Activated T-helper 1 cell treated with anti-CD3 and anti-CD28 coated beads, Interleukin-12 subunit alpha, Interleukin-12 subunit beta, Interleukin-2, Interleukin-4 antibody, amounts not matched to agents 30 ng/mL and 10 ng/mL and 1 ng/mL, durations not matched to agents 14 hours and 24 hours and 36 hours (primary cell): ENCODE measurements at regions of chr5 and their contacts with region 1.

Region 1: GRCh38 chr5:78359831-78360673 is at the start of gene SCAMP1:
- DNase-seq: peak; percentile 93
- H3K4me3 Mint-ChIP-seq: peak within 1 kb of the TSS; percentile 98
- H3K27ac Mint-ChIP-seq: peak within 1 kb of the TSS; percentile 92
- H3K4me1 Mint-ChIP-seq: peaks cover 32% of the 10 kb centered on the region
- H3K27me3 Mint-ChIP-seq: no peaks in the 10 kb centered on the region
- total RNA-seq, gene SCAMP1: 21.3 and 21.7 TPM in 2 replicates

Region 2: GRCh38 chr5:78260771-78261170 is 99.3 kb before region 1 on chr5:
- intact Hi-C with region 1: no loop called
- DNase-seq: no peak
- H3K4me3 Mint-ChIP-seq: no peak overlapping the region
- H3K27ac Mint-ChIP-seq: no peak overlapping the region
- H3K4me1 Mint-ChIP-seq: no peaks in the 10 kb centered on the region
- H3K27me3 Mint-ChIP-seq: no peaks in the 10 kb centered on the region

Region 3: DNA sequence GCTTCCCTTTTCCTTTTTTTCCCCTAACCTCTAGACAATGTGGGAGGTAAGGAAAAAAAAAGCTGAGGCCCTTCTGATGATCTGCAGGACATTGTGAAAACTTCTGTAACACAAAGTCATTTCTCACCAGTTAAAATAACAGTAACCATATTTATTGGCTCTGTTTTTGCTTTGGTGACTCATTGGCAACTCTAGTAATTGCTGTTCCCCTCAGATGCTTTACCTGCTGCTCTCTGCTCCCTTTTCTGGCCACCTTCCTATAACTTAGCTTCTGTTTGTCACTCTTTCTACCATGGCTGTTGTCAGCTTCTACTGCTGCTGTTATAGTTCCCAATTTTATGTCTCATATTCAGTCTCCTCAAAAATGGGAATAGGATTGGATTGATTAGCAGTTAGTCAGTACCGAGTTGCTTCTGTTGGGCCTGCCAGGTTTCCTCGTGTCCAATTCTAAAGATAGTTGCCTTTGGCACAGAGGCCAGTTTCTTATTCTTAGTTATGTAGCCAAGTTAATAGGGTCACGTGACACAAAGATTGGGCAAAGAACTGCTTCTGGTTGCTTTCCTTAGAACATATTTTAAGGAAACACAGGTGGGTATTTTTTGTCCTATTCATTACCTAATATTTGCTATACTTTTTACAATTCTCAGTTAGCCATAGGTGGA is 17.1 kb after region 1 on chr5:
- intact Hi-C with region 1: no loop called
- DNase-seq: no peak
- H3K4me3 Mint-ChIP-seq: no peak overlapping the region
- H3K27ac Mint-ChIP-seq: no peak overlapping the region
- H3K4me1 Mint-ChIP-seq: peaks cover 10% of the 10 kb centered on the region
- H3K27me3 Mint-ChIP-seq: no peaks in the 10 kb centered on the region

Region 4: DNA sequence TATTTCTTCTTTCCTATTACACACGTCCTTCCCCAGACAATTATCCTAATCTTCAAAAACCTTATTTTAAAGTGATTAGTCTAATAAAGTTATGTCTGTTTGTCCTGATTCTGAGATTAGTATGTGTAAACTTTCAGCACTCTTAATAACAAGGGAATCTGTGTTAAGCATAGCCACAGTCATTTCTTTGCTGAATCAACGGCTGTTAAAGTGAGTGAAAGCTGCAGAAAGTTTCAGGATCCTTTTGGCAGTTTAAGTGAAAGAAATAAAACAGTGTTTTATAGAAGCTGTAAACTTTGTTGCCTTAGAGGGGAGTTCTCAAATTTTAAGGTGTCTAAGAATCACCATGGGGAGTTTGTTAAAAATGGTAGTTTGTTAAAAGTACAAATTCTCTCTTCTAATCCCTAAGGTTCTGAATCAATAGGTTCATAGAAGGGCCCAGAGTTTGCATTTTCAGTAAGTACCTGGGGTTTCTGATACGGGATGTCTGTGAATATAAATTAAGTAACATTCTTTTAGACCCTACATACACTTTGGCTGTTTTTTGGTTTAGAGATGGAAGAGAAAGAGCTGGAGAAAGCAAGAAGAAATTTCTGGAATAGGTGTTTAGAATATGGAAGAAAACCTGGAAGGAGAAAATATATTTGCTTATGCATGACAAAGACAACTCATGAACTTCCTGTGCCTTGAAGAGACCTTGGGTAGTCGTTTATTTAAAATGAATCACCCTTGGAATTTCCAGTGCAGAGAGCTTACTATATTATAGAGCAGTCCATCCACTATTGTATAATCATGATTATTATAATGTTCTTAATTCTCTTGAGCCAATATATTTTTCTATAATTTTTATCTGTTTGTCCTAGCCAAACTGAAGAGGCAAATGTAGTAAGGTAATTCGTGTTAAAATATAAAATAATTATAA is 46.0 kb after region 1 on chr5:
- intact Hi-C with region 1: loop called (anchors 2 kb)
- DNase-seq: no peak
- H3K4me3 Mint-ChIP-seq: no peak overlapping the region
- H3K27ac Mint-ChIP-seq: peak overlapping the region; percentile 45
- H3K4me1 Mint-ChIP-seq: peaks cover 37% of the 10 kb centered on the region
- H3K27me3 Mint-ChIP-seq: no peaks in the 10 kb centered on the region

Region 5: DNA sequence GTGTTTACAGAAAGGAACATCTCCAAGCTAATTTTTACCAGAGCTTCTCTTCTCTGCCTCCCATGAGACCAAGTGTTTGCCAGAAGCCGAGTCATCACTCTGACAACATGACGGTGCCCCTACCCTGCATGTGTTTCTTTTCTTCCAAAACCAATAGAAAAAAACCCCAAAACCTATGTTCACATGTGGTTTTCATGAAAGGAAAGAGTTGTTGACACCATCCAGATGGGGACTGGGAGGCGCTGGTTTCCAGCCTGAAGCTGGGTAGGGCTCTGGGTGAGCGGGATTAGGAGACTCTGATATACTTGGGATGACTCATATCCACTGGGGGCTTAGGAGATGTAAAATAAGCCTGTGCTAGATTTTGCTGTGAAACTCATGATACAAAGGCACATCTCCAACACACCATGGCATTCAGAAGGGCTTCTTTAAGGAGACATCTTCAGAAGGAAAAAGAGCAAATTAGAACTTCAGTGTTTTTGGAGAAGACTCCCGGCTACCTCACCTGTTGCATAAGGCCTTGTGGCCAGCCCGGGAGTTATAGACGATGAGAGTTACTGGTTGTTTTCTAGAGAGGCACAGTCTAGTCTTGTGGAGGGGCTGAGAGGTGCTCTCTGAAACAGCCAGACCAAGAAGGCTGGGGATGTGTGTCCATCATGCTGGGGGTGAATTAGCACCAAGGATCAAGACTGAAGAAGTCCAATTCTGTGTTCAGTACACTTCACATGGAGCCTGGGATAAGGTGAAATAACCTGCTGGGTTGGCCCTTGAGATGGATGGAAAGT is 397.4 kb after region 1 on chr5:
- intact Hi-C with region 1: loop called (anchors 5 kb)
- DNase-seq: peak; percentile 9
- H3K4me3 Mint-ChIP-seq: peak overlapping the region; percentile 55
- H3K27ac Mint-ChIP-seq: peak overlapping the region; percentile 76
- H3K4me1 Mint-ChIP-seq: peaks cover 31% of the 10 kb centered on the region
- H3K27me3 Mint-ChIP-seq: no peaks in the 10 kb centered on the region

Region 6: DNA sequence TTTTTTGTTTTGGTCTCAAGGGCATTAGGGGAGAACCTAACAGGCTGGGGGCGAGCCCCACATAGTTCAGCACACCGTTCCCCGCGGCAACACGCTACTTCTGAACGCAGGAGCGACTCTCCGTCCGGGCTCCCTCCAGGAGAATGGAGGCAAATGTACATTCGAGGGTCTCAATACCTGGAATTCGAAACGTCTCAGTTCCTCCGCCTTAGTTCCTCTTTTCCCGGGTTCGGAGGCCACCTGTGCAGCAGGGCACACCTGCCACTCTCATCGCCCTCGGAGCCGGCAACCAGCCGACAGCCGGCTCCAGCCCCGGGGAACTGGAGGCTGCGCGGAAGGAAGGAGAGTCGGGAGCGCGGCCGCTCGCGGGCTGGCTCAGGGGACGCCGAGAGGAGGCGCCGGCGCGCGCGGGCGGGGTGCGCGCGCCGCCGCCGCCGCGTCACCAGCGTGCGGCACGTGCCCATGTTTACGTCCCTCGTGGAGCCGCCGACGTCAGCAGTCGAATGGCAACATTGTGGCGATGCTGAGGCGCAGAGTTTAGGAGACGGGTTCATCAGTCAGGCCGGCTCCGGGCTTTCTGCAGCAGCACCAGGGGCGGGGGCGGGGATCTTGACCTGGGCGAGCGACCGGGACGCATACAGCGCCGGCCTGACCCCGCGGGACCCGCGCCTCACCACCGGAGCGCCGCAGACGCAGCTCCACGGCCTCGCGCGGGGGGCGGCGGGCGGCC is 875.7 kb after region 1 on chr5 and contains the start of gene JMY:
- intact Hi-C with region 1: loop called (anchors 2 kb)
- DNase-seq: peak; percentile 77
- H3K4me3 Mint-ChIP-seq: peak within 1 kb of the TSS; percentile 94
- H3K27ac Mint-ChIP-seq: peak within 1 kb of the TSS; percentile 95
- H3K4me1 Mint-ChIP-seq: peaks cover 33% of the 10 kb centered on the region
- H3K27me3 Mint-ChIP-seq: peaks cover 2% of the 10 kb centered on the region
- total RNA-seq, gene JMY: 5.5 and 5.9 TPM in 2 replicates